Left cardiac atrium (tissue), 4 donors: ENCODE measurements at regions of chr21 and their contacts with region 1.

Region 1: DNA sequence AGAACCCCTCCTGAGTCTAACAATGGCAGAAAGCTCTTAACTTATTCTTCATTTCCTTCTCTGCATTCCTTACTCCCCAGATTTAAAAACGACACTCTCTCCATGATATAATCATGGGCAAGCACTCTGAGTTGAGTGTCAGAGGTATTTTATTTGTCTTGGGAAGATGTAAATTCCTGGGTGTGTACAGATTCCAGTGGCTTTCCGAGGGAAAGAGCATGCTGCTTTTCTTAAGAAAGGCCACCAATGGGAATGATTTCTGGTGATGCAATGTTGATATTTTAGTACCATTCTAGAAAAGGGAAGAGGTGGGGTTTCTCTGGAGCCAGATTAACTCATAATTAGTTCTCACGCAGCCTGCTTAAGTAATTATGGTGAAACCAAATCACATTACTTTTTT is 47.7 kb upstream of the BTG3 start:
- DNase-seq: no peak
- ATAC-seq: no peak

Region 2: GRCh38 chr21:17726047-17726830 is 65.8 kb after region 1 on chr21:
- intact Hi-C with region 1: loop called in 1 of 2 experiments (anchors 10 kb)
- DNase-seq: no peak
- ATAC-seq: no peak